Head of caudate nucleus (tissue), 42 donors: ENCODE measurements at regions of chr17 and their contacts with region 1.

Region 1: GRCh38 chr17:81601525-81602120 is 35.3 kb downstream of the NPLOC4 start:
- DNase-seq: peak in 25 of 42 donors; percentile 22 to 77 (median 53)

Region 2: GRCh38 chr17:81253358-81254131 is 348.1 kb before region 1 on chr17:
- intact Hi-C with region 1: loop called (anchors 2 kb)
- DNase-seq: peak in 38 of 42 donors; percentile 39 to 88 (median 64)

Region 3: DNA sequence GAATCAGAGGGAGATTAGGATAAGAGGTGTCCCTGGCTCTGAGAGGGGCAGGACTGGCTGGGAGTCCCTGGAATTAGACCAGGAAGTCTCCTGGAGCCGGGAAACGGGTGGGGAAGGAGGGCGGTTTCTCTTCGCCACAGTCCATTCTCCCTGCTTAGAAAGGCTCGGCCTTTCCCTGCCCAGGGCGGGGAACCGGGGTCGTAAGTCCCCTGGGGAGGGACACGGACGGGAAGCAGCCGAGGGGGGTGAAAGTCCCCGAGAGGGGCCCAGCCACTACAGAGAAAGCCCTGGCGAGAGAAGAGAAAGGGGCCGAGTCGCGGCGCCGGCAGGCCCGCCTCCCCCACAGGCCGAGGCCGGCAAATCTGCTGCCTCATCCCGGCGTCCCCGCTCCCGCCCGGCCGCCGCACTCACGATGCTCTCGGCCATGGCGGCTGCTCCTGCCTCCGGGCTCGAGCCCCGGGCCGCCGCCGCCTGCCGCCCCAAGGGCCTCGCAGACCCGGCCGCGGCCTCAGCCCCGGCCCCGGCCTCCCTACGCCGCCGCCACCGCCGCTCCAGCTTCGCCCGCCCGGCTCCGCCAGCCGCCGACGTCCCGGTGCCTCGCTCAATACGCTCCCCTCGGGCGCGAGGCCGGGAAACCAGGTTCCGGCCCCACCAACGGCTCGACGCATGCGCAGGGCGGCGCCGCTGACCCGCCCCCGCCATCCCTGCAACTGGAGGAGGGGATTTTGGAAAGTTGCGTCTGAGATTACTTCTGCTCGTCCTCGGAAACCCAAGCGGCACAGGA is 35.1 kb after region 1 on chr17 and contains the starts of genes NPLOC4 and TSPAN10:
- intact Hi-C with region 1: no loop called
- DNase-seq: peak; percentile 52 to 93 (median 86)